ENCODE measurements at regions of chr2 and their contacts with region 1.

Region 1: DNA sequence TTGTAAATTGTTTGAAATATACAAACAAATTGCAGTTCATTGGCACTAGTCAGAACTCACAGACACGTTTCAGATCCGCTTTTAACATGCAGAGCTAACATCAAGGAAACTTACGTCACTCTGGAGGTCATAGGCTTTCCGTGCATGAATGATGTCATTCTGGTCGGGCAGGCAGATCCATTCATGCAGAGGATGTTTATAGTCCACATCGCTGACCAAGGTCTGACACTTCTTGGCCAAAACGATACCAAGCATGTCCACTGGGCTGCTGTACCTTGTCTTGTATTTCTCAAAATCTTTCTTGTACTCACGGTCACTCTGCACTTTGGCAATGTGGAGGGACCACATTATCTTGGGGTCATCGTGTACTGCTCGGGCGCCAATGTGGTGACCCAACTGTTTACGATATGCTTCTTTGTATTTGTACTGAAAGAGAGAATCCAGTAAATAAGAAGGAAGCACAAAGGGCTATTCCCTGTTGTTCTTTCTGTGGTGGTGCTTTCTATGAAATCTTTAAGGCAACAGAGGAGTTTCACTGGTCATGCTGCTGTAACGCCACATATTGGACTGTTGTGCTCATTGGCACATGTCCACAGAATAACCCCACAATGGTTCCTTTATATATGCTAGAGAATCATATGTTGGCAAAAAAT is 114.8 kb downstream of the NEB start:
- DNase-seq: no peak
- H3K4me3 Mint-ChIP-seq: no peak overlapping the region
- H3K27ac Mint-ChIP-seq: no peak overlapping the region
- H3K4me1 Mint-ChIP-seq: peaks cover 10% of the 10 kb centered on the region
- H3K27me3 Mint-ChIP-seq: peaks cover 2% of the 10 kb centered on the region

Region 2: DNA sequence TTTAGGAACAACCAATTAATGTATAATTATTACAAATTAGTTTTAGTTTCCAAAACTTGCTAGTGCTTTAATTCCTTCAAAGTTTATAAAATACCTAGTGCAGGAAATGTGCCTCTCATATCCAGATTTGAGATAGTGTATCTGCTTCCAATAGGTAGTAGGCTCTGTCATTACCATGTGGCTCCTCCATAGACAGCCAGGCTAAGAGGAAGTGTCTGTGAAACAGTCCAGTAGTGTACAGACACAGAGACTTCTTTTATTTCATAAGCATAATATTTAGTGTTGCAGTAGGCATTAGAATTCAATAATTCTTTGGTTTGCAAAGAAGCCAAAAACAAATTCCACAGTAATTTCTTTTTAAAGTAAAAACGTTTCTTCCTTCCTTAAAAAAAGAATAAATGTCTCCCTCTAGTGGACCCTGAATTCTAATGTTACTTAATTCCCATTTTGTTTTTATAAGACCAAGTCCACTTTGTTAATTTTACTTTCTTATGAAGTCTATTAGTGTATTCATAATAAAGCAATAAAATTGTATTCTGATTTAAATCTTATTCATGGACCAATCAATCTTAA is 13.6 kb after region 1 on chr2:
- intact Hi-C with region 1: loop called (anchors 1 kb)
- DNase-seq: no peak
- H3K4me3 Mint-ChIP-seq: no peak overlapping the region
- H3K27ac Mint-ChIP-seq: no peak overlapping the region
- H3K4me1 Mint-ChIP-seq: peaks cover 18% of the 10 kb centered on the region
- H3K27me3 Mint-ChIP-seq: no peaks in the 10 kb centered on the region

Region 3: DNA sequence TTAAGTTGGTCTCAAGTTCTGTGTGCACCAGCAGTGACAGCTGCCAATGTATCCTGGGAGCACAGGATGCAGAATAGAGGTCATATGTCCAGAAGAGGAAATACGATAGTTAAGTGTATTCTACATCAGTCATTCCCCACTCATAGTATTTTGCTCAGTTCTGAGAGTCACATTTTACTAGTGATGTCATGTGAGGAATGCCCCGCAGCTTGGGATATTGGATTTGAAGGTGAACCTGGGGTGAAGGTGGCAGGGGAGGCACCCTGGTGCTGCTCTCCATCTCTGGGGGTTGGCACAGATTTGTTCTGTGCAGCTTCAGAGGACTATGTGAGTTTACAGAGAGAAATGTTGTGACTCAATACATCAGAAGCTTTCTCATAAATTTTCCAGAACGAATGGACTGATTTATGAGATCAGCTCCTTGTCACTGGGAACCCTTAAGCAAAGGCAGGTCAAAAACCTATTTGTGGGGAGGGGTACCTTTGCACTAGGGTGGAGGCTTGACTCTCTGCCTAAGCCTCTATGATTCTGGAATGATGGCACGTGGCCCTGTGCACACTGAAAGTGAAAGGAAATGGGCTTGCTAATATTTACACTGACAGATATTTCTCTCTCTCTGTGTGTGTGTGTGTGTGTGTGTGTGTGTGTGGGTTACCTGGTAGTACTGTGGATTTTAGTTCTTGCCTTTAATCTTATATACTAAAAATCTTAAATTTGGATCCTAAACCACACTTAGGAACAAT is 18.9 kb after region 1 on chr2:
- intact Hi-C with region 1: loop called (anchors 1 kb)
- DNase-seq: no peak
- H3K4me3 Mint-ChIP-seq: peak overlapping the region; percentile 30
- H3K27ac Mint-ChIP-seq: peak overlapping the region; percentile 90
- H3K4me1 Mint-ChIP-seq: peaks cover 26% of the 10 kb centered on the region
- H3K27me3 Mint-ChIP-seq: peaks cover 2% of the 10 kb centered on the region

Region 4: GRCh38 chr2:151819920-151820319 is 200.5 kb after region 1 on chr2:
- intact Hi-C with region 1: loop called (anchors 2 kb)
- DNase-seq: no peak
- H3K4me3 Mint-ChIP-seq: no peak overlapping the region
- H3K27ac Mint-ChIP-seq: peak overlapping the region; percentile 33
- H3K4me1 Mint-ChIP-seq: peaks cover 38% of the 10 kb centered on the region
- H3K27me3 Mint-ChIP-seq: no peaks in the 10 kb centered on the region

Measured in activated T-helper 2 cell treated with anti-CD3 and anti-CD28 coated beads, Interferon-gamma antibody, Interleukin-2, Interleukin-4, amounts not matched to agents 10 μg/mL and 5 μg/mL and 100 μg/mL, durations not matched to agents 14 hours and 24 hours and 36 hours (primary cell).